WTC11 (cell line): ENCODE measurements at regions of chr16 and their contacts with region 1.

Region 1: DNA sequence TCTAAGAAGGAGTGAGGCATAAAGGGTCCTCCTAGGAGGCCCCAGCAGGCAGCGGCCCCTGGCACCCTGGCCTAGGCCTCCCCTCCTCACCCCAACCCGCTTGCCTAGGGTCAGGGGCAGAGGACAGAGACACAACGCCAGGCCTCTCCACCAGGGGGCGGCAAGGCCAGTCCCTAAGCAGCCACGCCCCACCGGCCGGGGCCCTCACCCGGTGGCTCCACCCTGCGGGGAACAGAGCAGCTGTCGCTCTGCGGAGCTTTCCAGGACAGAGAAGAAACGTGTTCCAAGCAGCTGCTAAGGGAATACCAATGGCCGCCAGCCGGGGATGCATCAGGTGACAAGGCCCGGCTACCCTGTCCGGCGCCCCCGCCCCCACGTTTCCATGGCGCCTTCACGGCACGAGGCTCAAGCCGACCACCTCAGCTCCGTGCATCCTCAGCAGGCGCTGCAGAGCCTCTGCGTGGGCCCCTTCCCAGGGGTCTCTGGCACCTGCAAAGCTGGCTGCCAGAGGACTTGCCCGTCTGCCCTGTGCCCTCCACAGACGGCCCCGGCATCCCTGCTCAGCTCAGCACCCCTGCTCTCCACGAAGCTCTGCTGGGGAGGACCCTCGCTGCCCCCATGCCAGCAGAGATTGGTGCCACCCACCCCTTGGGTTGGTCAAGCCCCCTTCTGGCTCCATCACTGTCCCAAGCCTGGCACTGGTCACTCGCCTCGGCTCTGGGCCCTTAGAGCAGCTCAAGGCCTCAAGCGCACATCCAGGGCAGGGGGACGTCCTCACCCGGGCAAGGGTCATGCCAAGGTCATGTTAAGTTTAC is 5.6 kb downstream of the ZNF598 start:
- DNase-seq: peak; percentile 99
- ATAC-seq: peak; percentile 94
- H3K4me3 Mint-ChIP-seq: peak overlapping the region; percentile 27; the same call in 1 of the 2 replicates
- H3K27ac Mint-ChIP-seq: no peak overlapping the region
- H3K4me1 Mint-ChIP-seq: peaks cover 35% of the 10 kb centered on the region
- H3K27me3 Mint-ChIP-seq: no peaks in the 10 kb centered on the region
- CTCF ChIP-seq: peak; percentile 92

Region 2: DNA sequence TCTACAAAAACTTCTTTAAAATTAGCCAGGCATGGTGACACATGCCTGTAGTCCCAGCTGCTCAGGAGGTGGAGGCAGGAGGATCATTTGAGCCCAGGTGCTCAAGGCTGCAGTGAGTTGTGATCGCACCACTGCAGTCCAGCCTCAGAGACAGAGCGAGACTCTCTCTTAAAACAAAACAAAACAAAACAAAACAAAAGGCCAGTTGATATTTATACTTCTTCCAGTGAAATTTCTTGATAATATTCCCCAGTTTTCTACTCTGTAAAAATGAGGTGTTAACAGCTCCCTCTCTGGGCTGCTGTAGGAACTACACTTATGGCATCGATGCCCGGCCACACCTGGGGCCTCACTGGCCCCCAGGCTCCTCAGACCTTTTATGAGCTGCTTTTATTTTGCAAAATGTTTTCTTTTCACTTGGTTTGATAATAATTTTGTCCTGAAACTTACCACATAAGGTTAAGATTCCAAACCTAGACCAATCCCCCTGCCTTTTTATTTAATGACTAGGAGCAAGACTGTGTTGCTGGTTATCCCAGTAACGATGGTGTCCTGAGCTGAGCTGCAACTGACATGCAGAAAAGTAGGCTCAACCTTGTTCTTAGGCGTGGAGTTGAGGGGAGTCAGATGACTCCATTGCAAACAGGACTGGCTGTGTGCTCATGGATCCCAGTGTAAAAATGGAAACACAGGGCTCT is 280.4 kb before region 1 on chr16:
- CTCF ChIA-PET with region 1: no interaction called
- POLR2A ChIA-PET with region 1: no interaction called
- DNase-seq: peak; percentile 65
- ATAC-seq: peak; percentile 71
- H3K4me3 Mint-ChIP-seq: no peak overlapping the region
- H3K27ac Mint-ChIP-seq: no peak overlapping the region
- H3K4me1 Mint-ChIP-seq: 0 out of 2 replicates have a peak, but pooled peaks cover 3% of the 10 kb centered on the region
- H3K27me3 Mint-ChIP-seq: no peaks in the 10 kb centered on the region
- CTCF ChIP-seq: peak; percentile 69

Region 3: GRCh38 chr16:1983544-1984346 is 20.3 kb before region 1 on chr16 and contains the start of gene GFER:
- CTCF ChIA-PET with region 1: interaction called, 19 read pairs
- POLR2A ChIA-PET with region 1: no interaction called
- DNase-seq: peak; percentile 95
- ATAC-seq: peak; percentile 78
- H3K4me3 Mint-ChIP-seq: peak within 1 kb of the TSS; percentile 81
- H3K27ac Mint-ChIP-seq: peak within 1 kb of the TSS; percentile 80
- H3K4me1 Mint-ChIP-seq: peaks cover 30% of the 10 kb centered on the region
- H3K27me3 Mint-ChIP-seq: peaks cover 42% of the 10 kb centered on the region
- CTCF ChIP-seq: no peak
- total RNA-seq, gene GFER: 56.0 to 58.5 TPM (median 57.0 TPM) in 3 replicates

Region 4: DNA sequence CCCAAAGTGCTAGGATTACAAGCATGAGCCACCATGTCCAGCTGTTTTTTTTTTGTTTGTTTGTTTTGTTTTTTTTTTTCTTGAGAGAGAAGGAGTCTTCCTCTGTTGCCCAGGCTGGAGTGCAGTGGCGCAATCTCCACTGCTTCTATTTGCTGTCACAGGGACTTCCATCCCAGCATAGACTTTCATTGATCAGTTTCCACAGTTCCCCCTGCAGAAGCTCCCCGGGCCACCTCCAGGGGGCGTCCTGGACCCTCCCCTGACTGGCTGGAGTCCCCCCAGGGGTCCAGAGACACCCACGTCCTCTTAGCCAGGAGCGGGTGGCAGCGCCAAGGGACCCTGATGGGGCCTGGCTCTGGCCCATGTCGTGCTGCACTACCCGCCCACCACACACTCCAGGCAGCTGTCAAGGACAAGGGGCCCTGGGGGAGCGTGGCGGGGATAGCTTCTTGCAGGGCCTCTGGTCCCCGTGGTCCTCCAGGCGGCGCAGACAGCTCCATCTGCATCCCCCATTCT is 12.4 kb after region 1 on chr16:
- CTCF ChIA-PET with region 1: interaction called, 82 read pairs
- POLR2A ChIA-PET with region 1: no interaction called
- DNase-seq: peak; percentile 66
- ATAC-seq: peak; percentile 17
- H3K4me3 Mint-ChIP-seq: no peak overlapping the region
- H3K27ac Mint-ChIP-seq: no peak overlapping the region
- H3K4me1 Mint-ChIP-seq: peaks cover 2% of the 10 kb centered on the region; the same call in 1 of the 2 replicates
- H3K27me3 Mint-ChIP-seq: peaks cover 53% of the 10 kb centered on the region
- CTCF ChIP-seq: peak; percentile 60; the same call in 1 of the 2 replicates

Region 5: DNA sequence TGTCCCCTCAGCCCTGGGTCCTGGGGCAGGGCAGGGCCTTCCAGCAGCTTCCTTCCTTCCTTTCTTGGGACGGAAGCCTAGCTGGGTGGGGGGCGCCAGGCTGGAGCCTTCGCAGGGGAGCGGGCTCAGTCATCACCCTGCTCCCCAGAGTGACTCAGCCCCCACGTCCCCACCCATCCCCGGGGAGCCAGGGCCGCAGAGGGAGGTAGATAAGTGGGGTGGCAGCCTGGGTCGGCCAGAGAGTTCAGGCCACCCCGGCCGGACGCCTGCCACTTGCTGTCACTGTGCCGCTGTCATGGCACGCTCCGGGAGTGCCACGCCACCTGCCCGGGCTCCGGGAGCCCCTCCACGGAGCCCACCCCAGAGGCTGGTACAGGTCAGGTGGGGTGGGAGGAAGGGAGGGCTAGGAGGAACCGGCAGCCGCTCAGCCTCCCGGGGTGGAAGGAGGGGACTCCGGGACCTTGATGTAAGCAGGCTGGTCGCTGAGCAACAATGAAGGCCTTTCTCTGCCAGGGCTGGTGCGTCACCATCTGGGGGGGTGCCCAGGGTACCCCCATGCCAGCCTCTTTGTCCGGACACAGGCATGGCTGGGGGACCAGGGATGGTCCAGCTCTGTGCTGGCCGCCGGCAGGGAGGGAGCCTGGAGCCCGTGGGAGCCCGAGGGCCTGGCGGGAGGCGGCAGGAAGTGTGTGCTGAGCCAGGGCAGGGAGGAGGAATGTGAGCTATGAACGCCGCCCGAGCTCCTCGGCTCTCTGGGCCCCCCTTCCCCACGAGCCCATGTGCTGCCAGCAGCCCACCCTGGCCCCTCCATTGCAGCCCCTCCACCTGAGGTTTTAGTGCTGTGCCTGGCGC is 29.2 kb after region 1 on chr16:
- CTCF ChIA-PET with region 1: interaction called, 16 read pairs
- POLR2A ChIA-PET with region 1: no interaction called
- DNase-seq: no peak
- ATAC-seq: peak; percentile 18; the same call in 1 of the 2 replicates
- H3K4me3 Mint-ChIP-seq: no peak overlapping the region
- H3K27ac Mint-ChIP-seq: no peak overlapping the region
- H3K4me1 Mint-ChIP-seq: no peaks in the 10 kb centered on the region
- H3K27me3 Mint-ChIP-seq: peaks cover under 1% of the 10 kb centered on the region; the same call in 1 of the 2 replicates
- CTCF ChIP-seq: no peak

Region 6: GRCh38 chr16:2056681-2057407 is 52.8 kb after region 1 on chr16:
- CTCF ChIA-PET with region 1: interaction called, 10 read pairs
- POLR2A ChIA-PET with region 1: no interaction called
- DNase-seq: no peak
- ATAC-seq: peak; percentile 79
- H3K4me3 Mint-ChIP-seq: no peak overlapping the region
- H3K27ac Mint-ChIP-seq: no peak overlapping the region
- H3K4me1 Mint-ChIP-seq: no peaks in the 10 kb centered on the region
- H3K27me3 Mint-ChIP-seq: no peaks in the 10 kb centered on the region
- CTCF ChIP-seq: no peak

Region 7: DNA sequence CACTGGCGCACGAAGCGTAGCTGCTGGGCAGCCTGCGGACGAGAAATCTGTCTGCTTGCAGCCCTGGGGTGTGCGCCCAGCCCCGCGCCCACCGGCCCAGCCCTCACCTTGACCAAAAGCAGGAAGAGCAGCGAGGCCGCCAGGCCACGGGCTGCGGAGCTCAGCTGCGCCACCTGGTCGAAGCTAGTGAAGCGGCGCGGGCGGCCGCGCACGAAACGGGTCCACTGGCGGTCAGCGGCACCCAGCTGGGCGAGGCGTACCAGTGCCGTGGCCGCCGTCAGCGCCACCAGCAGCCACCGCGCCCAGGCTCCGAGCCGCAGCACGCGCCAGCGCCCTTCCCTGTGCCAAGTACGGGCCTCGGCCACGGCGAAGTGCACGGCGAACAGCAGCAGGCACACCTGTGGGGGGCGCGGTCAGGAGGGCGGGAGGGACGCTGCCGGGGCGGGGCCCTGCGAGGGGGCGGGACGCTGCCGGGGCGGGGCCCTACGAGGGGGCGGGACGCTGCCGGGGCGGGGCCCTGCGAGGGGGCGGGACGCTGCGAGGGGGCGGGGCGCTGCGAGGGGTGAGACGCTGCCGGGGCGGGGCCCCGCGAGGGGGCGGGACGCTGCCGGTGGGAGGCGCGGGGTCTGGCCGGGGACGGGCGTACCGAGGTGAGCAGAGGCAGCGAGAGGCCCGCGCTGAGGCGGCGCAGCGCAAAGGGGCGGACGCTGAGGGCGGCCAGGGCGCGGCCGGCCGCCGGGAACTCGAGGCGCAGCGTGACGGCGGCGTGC is 86.9 kb after region 1 on chr16:
- CTCF ChIA-PET with region 1: interaction called, 33 read pairs
- POLR2A ChIA-PET with region 1: no interaction called
- DNase-seq: peak; percentile 95
- ATAC-seq: peak; percentile 84
- H3K4me3 Mint-ChIP-seq: peak overlapping the region; percentile 55
- H3K27ac Mint-ChIP-seq: no peak overlapping the region
- H3K4me1 Mint-ChIP-seq: no peaks in the 10 kb centered on the region
- H3K27me3 Mint-ChIP-seq: no peaks in the 10 kb centered on the region
- CTCF ChIP-seq: no peak

Region 8: DNA sequence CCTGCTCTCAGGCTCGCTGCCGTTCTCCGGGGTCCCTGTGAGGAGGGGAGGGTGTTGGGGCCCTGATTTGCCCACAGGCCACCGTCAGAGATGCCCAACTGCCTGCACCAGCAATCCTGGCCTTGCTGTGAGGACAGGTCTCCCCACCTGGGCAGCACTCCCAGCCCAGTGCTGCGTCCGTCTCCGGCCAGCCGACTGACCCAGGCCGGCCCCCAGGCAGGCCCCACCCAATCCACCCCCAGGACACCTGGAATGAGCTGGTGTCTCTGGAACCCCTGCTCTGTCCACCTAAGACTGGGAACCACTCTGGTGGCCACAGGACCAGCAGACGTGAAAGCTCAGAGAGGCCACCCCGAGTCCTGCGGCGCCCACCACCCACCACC is 111.5 kb after region 1 on chr16:
- CTCF ChIA-PET with region 1: no interaction called
- POLR2A ChIA-PET with region 1: no interaction called
- DNase-seq: no peak
- ATAC-seq: no peak
- H3K4me3 Mint-ChIP-seq: no peak overlapping the region
- H3K27ac Mint-ChIP-seq: no peak overlapping the region
- H3K4me1 Mint-ChIP-seq: no peaks in the 10 kb centered on the region
- H3K27me3 Mint-ChIP-seq: no peaks in the 10 kb centered on the region
- CTCF ChIP-seq: no peak

Region 9: DNA sequence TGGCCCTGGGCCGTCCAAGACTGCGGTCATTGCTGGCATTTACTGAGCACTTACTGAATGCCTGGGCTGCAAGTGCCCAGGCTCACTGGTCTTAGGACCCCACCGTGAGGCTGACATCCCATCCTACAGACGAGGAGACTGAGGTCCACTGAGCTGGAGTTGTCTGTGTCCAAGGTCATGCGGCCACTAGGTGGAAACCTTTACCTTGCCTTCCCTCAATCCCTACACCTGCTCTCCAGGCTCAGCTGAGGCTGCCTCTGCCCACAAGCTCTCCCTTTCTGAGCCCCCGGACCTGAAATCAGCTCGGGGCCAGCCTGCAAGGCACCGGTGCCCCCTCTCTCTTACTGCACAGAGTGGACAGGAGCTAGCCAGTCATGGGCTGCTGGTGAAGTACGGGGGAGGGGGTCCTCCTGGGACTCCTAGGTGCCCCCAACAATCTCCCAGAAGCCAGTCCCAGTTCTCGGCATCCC is 190.9 kb after region 1 on chr16:
- CTCF ChIA-PET with region 1: interaction called, 14 read pairs
- POLR2A ChIA-PET with region 1: no interaction called
- DNase-seq: peak; percentile 73
- ATAC-seq: peak; percentile 73
- H3K4me3 Mint-ChIP-seq: peak overlapping the region; percentile 66
- H3K27ac Mint-ChIP-seq: no peak overlapping the region
- H3K4me1 Mint-ChIP-seq: peaks cover 4% of the 10 kb centered on the region; the same call in 1 of the 2 replicates
- H3K27me3 Mint-ChIP-seq: peaks cover 27% of the 10 kb centered on the region
- CTCF ChIP-seq: 0 out of 2 replicates have a peak, but pooled peaks have one; percentile 33